ENCODE measurements at regions of chr2 and their contacts with region 1.

Region 1: GRCh38 chr2:224284134-224284946 is 117.6 kb downstream of the FAM124B start:
- DNase-seq: peak; percentile 17
- ATAC-seq: peak; percentile 42
- H3K4me3 Mint-ChIP-seq: no peak overlapping the region
- H3K27ac Mint-ChIP-seq: no peak overlapping the region
- H3K4me1 Mint-ChIP-seq: no peaks in the 10 kb centered on the region
- H3K27me3 Mint-ChIP-seq: peaks cover 13% of the 10 kb centered on the region
- CTCF ChIP-seq: peak; percentile 81

Region 2: GRCh38 chr2:223957092-223957851 is 327.1 kb before region 1 on chr2 and contains the start of gene MRPL44:
- CTCF ChIA-PET with region 1: interaction called, 14 read pairs
- POLR2A ChIA-PET with region 1: no interaction called
- intact Hi-C with region 1: no loop called
- DNase-seq: peak; percentile 97
- ATAC-seq: peak; percentile 99
- H3K4me3 Mint-ChIP-seq: peak within 1 kb of the TSS; percentile 93
- H3K27ac Mint-ChIP-seq: peak within 1 kb of the TSS; percentile 90
- H3K4me1 Mint-ChIP-seq: peaks cover 72% of the 10 kb centered on the region
- H3K27me3 Mint-ChIP-seq: no peaks in the 10 kb centered on the region
- CTCF ChIP-seq: no peak
- total RNA-seq, gene MRPL44: 37.8 to 40.4 TPM

Region 3: DNA sequence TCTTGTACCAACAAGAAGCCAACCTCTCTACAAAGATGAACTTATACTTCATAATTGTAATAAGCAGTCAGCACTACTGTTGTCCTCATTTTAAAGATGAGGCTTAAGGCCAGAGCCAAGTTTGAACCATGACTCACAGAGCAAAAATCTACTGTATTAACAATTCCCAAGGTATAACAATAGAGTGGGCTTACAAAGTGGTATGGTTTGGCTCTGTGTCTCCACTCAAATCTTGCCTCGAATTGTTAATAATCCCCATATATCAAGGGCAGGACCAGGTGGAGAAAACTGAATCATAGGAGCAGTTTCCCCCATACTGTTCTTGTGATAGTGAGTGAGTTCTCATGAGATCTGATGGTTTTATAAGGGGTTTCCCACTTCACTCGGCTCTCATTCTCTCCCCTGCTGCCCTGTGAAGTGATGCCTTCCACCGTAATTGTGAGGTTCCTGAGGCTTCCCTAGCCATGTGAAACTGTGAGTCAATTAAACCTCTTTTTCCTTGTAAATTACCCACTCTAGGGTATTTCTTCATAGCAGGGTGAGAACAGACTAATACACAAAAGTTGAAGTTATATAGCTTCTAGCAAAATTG is 307.6 kb before region 1 on chr2:
- CTCF ChIA-PET with region 1: interaction called, 242 read pairs
- POLR2A ChIA-PET with region 1: no interaction called
- intact Hi-C with region 1: no loop called
- DNase-seq: no peak
- ATAC-seq: no peak
- H3K4me3 Mint-ChIP-seq: no peak overlapping the region
- H3K27ac Mint-ChIP-seq: no peak overlapping the region
- H3K4me1 Mint-ChIP-seq: no peaks in the 10 kb centered on the region
- H3K27me3 Mint-ChIP-seq: no peaks in the 10 kb centered on the region
- CTCF ChIP-seq: no peak

Region 4: DNA sequence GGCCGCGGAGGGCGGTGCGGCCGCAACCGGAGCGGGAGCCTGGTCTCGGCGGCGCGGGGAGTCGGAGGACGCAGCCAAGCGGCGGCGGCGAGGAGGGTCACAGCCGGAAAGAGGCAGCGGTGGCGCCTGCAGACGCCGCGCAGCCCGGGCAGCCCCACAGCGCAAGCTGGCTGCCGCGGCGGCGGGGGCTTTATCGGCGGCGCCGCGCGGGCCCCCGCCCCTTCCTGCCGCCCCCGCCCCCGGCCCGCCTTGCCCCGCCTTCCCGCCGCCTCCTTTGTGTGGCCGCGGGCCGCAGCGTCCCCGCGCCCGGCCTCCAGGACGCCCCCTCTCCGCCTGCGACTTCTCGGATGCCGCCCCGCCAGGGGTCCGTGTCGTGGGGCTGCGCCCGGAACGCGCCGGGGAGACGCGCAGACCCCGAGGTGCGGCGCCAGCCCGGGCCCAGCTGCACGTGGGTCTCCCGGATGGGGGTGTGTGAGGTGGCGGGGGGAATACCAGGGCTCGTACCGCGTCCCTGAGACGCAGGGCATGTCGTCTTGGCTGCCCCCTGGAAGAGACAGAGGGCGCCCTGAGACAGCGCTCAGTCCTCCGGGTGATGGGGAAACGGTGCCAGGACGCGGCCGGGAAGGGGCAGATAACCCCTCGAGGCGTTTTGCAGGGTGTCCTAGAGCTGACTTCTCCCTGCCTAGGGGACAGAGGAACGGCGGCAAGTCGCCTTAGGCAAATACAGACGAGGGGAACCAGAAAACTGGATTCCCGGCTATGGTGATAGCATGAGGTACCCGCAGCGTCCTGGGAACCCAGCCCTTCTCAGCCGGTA is 245.0 kb before region 1 on chr2 and contains the start of gene SERPINE2:
- CTCF ChIA-PET with region 1: interaction called, 11 read pairs
- POLR2A ChIA-PET with region 1: no interaction called
- intact Hi-C with region 1: no loop called
- DNase-seq: peak; percentile 75
- ATAC-seq: peak; percentile 80
- H3K4me3 Mint-ChIP-seq: peak within 1 kb of the TSS; percentile 89
- H3K27ac Mint-ChIP-seq: peak within 1 kb of the TSS; percentile 35
- H3K4me1 Mint-ChIP-seq: peaks cover 17% of the 10 kb centered on the region
- H3K27me3 Mint-ChIP-seq: peaks cover 43% of the 10 kb centered on the region
- CTCF ChIP-seq: no peak
- total RNA-seq, gene SERPINE2: 40.4 to 42.4 TPM

Measured in activated CD8-positive, alpha-beta T cell treated with anti-CD3 and anti-CD28 coated beads for 36 hours (primary cell).